GM10248 (cell line): ENCODE measurements at regions of chr16 and their contacts with region 1.

Region 1: DNA sequence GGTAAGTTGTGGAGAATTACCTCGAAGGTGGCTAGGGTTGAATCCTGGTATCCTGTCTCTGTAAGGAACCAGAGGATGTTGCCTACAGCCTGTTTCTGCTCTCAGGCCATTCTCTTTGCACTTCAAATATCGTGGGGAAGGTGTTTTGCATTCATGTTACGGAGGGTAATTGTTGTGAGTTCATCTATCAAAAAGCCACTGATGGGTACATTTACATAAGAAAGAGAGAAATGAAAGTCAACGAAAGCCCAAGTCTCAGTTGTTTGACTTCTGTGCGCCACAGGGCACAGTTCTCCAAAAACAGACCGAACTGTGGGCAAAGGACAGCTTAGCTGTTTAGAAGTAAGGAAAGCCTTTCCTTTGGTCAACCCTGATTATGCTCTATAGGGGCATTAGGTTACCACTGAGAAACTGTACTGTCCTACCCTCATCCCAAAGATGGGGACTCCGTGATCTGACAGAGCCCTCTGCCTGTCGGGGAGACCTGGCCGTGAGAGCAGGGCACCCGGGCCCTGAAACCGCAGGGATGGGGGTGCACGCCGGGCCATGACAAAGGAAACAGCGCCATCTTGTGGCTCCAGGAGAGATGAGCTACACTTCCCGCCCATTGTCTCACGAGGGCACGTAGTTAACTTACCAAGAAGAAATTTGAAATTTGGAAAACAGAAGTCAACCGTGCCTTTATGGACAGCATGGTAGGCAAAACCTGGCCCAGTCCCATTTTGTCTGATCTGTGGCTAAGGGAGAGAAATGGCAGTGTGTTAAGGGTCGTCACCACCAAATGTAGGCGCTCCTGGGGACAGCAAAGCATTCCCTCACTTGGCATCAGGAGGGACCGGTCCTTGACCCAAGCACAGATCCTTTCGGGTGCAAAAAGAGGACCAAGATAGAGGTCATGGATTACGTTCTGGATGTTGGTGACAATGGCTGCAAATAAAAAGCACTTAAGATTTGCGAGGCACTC is 74.5 kb upstream of the DYNLRB2 start:
- DNase-seq: peak; percentile 64
- CTCF ChIP-seq: peak; percentile 65

Region 2: GRCh38 chr16:80273635-80274538 is 192.4 kb before region 1 on chr16:
- CTCF ChIA-PET with region 1: no interaction called
- POLR2A ChIA-PET with region 1: no interaction called
- DNase-seq: no peak
- CTCF ChIP-seq: no peak

Region 3: GRCh38 chr16:80447241-80447640 is 19.1 kb before region 1 on chr16:
- CTCF ChIA-PET with region 1: interaction called, 10 read pairs
- POLR2A ChIA-PET with region 1: no interaction called
- DNase-seq: no peak
- CTCF ChIP-seq: no peak

Region 4: DNA sequence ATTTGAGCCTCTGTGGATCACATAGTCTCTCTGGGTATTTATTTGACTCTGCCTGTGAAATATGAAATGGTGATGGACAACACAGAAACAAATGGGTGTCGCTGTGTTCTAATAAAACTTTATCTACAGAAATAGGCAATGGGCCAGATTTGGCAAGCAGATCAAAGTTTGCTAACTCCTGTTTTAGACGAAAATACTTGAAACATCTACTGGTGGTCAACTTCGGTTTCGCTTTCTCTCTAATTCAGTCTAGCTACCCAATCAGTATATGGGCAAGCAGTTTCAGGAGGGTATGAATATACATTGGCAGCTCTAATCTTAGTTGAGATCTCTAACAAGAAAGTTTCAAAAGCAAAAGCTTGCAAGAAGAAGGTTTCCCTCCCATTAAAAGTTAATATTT is 14.4 kb after region 1 on chr16:
- CTCF ChIA-PET with region 1: interaction called, 24 read pairs
- POLR2A ChIA-PET with region 1: no interaction called
- DNase-seq: no peak
- CTCF ChIP-seq: no peak

Region 5: GRCh38 chr16:80691111-80691741 is 224.9 kb after region 1 on chr16:
- CTCF ChIA-PET with region 1: no interaction called
- POLR2A ChIA-PET with region 1: no interaction called
- DNase-seq: no peak
- CTCF ChIP-seq: no peak

Region 6: DNA sequence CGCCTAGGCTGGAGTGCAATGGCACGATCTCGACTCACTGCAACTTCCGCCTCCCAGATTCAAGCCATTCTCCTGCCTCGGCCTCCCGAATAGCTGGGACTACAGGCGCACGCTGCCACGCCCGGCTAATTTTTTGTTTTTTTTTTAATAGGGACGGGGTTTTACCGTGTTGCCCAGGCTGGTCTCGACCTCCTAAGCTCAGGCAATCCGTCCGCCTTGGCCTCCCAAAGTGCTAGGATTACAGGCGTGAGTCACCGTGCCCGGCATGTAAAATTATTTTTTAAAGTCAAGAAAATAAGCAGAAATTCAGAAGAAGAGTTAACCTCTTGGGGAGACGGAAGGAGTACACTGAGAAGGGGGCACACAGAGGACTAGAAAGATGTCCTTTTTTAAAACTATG is 310.6 kb after region 1 on chr16:
- CTCF ChIA-PET with region 1: no interaction called
- POLR2A ChIA-PET with region 1: no interaction called
- DNase-seq: no peak
- CTCF ChIP-seq: no peak